ENCODE measurements at regions of chrX and their contacts with region 1.

Region 1: DNA sequence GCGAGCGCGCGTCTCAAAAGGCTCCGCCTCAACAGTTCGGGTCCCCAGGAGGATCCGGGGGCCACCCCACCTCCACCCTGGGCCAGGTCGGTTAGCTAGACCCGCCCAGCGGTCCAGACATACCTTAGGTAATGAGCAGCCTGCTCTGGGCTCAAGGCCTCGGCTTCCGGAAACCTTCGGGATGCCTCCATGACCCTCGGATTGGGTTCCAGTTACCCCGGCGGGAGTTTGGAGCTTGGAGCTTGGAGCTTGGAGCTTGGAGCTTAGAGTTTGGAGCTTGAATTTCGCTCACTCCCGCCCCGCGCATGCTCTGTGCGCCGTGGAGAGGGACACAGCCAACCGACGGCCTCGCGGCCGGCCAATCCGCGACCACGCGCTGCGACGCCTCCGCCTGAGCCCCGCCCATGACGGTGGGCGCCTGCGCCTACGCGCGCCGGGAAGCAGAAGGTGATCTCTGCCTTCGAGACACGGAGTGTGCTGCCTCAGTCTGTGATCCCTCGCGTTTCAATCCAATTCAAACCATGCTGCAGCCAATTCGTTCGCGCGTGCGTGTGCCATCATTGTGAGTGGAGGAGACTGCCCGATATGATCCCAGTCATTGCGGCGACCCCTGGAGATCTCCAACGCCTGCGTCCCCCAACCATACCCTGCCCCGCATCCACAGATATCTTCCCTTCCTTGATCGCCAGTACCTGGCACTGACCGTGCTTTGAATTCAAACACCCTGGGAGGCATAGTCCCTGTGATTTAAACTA is at the start of gene ERCC6L:
- DNase-seq: peak; percentile 86 to 94
- ATAC-seq: peak; percentile 95 to 98
- H3K4me3 ChIP-seq: peak within 1 kb of the TSS; percentile 62
- H3K27ac ChIP-seq: peak within 1 kb of the TSS; percentile 74 to 87
- H3K4me1 ChIP-seq: peaks cover 14% of the 10 kb centered on the region
- CTCF ChIP-seq: no peak
- EP300 ChIP-seq: no peak
- POLR2A ChIP-seq: peak; percentile 96
- RAD21 ChIP-seq: no peak
- polyA plus RNA-seq, gene ERCC6L: 7.6 and 10.4 TPM in 2 replicates

Region 2: GRCh38 chrX:72181178-72182125 is 57.4 kb before region 1 on chrX and contains the start of gene PIN4:
- CTCF ChIA-PET with region 1: interaction called, 3 read pairs
- POLR2A ChIA-PET with region 1: interaction called, 16 read pairs
- DNase-seq: peak; percentile 84 to 98
- ATAC-seq: peak; percentile 97 to 99
- H3K4me3 ChIP-seq: peak within 1 kb of the TSS; percentile 88
- H3K27ac ChIP-seq: peak within 1 kb of the TSS; percentile 82 to 90
- H3K4me1 ChIP-seq: peaks cover 10% of the 10 kb centered on the region
- CTCF ChIP-seq: no peak
- EP300 ChIP-seq: no peak
- POLR2A ChIP-seq: peak; percentile 57
- RAD21 ChIP-seq: peak in 1 of 2 experiments; percentile 2; a peak in 1 of 5 replicates
- polyA plus RNA-seq, gene PIN4: 24.0 and 43.4 TPM in 2 replicates